ENCODE measurements at regions of chr2 and their contacts with region 1.

Region 1: DNA sequence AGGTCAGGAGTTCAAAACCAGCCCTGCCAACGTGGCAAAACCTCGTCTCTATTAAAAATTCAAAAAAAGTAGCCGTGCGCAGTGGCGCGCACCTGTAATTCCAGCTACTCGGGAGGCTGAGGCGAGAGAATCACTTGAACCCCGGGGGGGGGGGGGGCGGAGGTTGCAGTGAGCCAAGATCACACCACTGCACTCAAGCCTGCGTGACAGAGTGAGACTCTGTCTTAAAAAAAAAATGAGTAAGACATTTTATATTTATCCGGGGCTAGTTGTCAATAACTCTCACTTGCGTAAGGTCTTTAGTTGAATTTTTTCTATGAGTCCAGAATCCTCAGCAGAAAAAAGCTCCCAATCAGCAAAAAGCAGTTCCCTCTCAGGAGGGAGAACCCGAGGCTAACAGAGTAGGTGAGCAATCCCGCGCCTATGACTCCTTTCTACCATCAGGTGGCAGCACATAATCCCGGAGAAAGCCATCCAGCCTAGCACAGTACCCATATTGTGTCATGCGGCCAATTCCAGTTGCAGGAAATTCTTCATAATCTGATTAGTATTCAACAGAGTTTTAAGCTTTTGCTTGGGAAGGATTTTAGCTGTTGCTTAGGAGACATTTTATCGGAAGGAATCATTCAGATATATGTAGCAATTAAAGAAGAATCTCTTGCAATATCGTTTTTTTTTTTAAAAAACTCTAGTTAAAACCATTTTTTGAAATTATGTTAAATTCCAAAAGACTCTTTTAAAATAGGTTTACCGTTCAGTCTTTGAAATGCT is 11.9 kb upstream of the CRYGA start:
- DNase-seq: peak; percentile 17
- H3K4me3 ChIP-seq: no peak overlapping the region
- CTCF ChIP-seq: peak; percentile 82

Region 2: DNA sequence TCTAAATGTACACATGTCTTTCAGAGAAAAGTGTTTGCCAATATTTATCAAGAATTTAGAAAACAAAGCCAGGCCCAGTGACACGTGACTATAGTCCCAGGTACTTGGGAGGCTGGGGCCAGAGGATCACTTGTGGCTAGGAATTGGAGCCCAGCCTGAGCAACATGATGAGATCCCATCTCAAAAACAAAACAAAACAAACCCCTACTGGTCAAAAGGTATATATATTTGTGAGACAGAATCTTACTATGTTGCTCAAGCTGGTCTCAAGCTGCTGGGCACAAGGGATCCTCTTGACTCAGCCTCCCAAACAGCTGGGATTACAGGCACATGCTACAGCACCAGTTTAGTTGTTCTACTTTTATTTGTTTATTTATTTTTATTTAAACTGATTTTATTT is 1821.6 kb before region 1 on chr2:
- CTCF ChIA-PET with region 1: no interaction called
- POLR2A ChIA-PET with region 1: no interaction called
- DNase-seq: no peak
- H3K4me3 ChIP-seq: no peak overlapping the region
- CTCF ChIP-seq: no peak

Region 3: DNA sequence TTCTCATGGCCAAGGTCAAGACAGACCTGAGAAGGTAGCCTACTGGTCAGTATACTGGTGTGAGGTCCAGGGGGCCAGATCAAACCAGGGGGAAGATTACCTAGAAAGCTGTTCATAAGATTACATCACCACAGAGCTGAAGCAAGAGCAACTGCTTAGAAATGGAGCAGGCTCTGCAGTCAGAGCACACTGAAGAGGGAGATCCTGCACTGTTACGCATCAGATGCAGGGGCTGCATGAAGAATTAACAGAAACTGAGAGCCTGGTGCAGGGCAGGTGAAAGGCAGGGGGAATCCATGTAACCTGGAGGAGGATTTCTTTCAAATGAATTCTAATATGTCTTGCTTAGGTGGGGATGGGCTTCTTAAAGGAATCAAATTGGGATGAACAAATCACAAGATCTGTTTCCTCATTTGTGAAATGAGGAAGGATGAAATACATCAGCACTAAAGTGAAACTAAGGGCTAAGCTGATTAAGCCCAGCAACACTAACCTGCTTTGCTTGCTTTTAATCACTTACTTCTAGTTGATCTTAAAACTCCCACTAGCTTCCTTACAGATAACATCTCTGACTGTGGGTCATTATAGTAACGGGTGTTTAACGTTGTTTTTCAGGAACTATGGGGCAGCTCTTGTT is 1806.2 kb before region 1 on chr2:
- CTCF ChIA-PET with region 1: no interaction called
- POLR2A ChIA-PET with region 1: no interaction called
- DNase-seq: no peak
- H3K4me3 ChIP-seq: no peak overlapping the region
- CTCF ChIP-seq: no peak

Region 4: DNA sequence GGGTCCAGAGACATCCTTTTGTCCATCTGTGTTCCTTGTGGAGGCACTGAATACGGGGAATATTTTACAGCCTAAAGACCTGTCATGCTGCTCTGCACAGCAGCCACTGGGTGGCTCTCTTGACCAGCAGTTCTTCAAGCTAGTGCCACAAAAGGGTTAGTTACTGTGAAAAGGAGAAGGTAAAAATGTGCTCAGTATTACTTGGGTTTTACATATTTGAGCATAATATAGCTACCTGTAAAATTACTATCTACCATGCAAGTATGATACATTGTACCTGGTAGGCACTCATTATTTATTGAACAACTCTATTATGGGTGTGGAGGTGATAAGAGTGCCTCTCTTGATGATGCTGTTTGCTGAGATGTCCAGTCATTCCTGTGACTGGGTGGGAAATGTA is 429.1 kb before region 1 on chr2:
- CTCF ChIA-PET with region 1: interaction called, 12 read pairs
- POLR2A ChIA-PET with region 1: no interaction called
- DNase-seq: peak; percentile 26
- H3K4me3 ChIP-seq: no peak overlapping the region
- CTCF ChIP-seq: peak; percentile 87

Region 5: DNA sequence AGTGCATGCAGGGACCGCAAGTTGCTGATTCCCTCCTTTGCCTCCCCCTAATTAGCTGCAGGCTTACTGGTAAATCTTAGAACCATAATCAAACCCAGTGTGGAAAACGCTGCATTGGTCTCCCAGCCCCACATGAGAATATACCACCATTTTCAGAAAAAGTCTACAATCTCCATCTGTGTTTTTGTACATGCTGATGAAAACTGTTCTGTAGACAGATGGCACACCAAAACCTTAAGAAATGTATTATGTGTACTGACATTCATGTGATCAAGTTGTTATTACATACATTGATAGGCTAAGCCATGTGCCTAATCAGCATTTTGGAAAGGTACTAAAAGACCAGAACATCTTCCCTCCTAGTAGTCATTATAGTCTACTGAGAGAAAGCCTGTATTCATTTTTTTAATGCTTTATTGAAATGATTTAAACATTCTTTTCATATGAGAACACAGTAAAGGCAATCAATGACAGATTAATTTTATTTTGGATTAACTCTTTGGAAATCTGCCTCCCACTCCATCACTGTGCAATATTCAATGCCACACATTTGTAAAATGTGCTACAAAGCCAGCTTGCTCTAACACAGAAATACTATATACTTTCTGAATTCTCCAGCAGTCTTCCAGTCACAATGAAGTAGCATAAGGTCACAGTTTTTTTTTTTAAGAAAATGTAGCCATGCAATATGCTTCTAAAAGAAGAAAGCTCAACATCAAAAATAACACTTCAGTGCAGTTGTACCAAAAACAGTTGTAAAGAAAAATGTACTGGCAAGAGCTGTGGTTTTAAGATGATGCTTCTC is 10.1 kb before region 1 on chr2:
- CTCF ChIA-PET with region 1: interaction called, 23 read pairs
- POLR2A ChIA-PET with region 1: no interaction called
- DNase-seq: no peak
- H3K4me3 ChIP-seq: no peak overlapping the region
- CTCF ChIP-seq: no peak

Region 6: GRCh38 chr2:208208335-208209085 is 33.3 kb after region 1 on chr2:
- CTCF ChIA-PET with region 1: interaction called, 16 read pairs
- POLR2A ChIA-PET with region 1: no interaction called
- DNase-seq: no peak
- H3K4me3 ChIP-seq: no peak overlapping the region
- CTCF ChIP-seq: no peak

Region 7: DNA sequence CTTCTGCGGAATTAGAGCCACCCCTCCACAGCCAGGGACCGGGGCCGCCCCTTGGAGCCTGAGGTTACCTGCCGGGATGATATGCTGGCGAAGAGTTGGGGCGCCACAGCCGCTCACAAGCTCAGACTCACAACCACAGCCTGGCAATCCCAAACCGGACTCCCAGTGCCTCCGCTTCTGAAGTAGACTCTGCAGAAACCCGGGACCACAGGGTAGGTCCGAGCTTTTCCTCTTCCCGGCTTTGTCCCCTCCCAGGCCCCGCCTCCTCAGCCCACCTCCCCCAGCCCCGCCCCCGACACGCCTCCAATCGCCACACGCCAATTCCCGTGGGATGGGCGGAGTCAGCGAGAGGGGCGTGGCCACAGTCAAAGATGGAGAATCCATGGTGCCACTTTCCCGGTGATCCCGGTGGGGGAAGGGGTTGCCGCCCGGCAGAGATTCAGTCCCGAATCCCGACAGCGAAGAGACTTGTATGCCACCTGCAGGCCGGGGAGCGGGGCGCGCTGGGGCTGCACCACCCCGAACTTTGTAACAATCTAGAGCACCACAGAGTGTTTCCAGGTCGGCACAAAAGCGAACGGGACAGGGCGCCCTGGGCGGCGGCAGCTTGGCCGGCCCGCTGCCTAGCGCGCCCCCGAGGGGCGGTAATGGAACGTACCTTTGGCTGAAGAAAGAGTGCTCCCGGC is 79.8 kb after region 1 on chr2 and contains the start of gene IDH1:
- CTCF ChIA-PET with region 1: interaction called, 48 read pairs
- POLR2A ChIA-PET with region 1: no interaction called
- DNase-seq: peak; percentile 37
- H3K4me3 ChIP-seq: peak within 1 kb of the TSS; percentile 89
- CTCF ChIP-seq: peak; percentile 56

Region 8: DNA sequence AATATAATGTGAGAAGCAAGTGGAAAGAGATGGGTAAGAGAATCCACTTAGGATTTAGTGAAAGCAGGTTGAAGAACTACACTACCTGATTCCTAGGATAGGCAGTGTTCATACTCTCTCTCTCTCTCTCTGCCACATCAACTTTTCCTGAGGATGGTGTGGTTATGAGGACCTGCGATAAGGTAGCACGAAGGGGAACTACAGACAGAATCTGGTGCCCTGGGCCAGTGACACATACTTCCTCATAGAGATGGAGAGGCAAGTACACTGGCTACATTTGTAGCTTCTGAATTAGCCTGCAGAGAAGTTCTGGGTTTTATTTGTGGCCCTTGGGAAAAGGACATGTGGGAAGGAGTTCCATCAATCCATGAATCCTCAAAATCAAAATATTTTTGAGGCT is 275.8 kb after region 1 on chr2:
- CTCF ChIA-PET with region 1: no interaction called
- POLR2A ChIA-PET with region 1: no interaction called
- DNase-seq: no peak
- H3K4me3 ChIP-seq: no peak overlapping the region
- CTCF ChIP-seq: no peak